Right ventricle myocardium superior (tissue), 1 donor: ENCODE measurements at regions of chr18 and their contacts with region 1.

Region 1: GRCh38 chr18:21191596-21192307 is 50.3 kb upstream of the GREB1L start:
- DNase-seq: peak; percentile 50
- ATAC-seq: peak; percentile 78

Region 2: DNA sequence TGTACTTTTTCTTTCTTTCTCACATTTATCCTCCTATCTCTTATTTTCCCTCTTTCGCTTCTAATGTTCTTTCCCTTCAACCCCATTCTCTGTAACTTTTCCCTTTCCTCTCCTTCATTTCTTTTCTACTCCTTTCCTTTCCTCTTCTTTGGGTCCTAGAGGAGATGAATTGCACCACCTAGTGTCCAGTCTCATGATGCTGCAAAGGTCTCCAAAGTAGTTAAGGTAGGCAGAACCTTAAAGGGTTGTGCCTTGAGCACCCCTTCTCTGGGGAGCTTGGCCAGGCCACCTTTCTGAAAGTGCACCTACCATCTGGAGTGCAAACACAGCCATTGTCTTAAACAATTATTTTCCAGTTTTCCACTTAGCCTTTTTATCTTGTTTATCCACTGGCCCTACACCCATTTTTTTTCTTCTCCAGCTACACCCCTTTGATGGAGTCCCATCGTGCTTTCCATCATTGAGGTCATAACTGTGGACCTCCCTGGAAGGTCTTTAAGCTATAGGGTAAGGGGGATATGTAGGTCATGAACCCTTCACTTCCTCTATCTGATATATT is 252.8 kb after region 1 on chr18:
- intact Hi-C with region 1: loop called (anchors 2 kb)
- DNase-seq: no peak
- ATAC-seq: peak; percentile 83

Region 3: GRCh38 chr18:21955757-21956652 is 764.3 kb after region 1 on chr18:
- intact Hi-C with region 1: loop called (anchors 10 kb)
- DNase-seq: peak; percentile 90
- ATAC-seq: peak; percentile 93